Activated T-helper 1 cell treated with anti-CD3 and anti-CD28 coated beads, Interleukin-12 subunit alpha, Interleukin-12 subunit beta, Interleukin-2, Interleukin-4 antibody, amounts not matched to agents 30 ng/mL and 10 ng/mL and 1 ng/mL, durations not matched to agents 14 hours and 24 hours and 36 hours (primary cell): ENCODE measurements at regions of chr4 and their contacts with region 1.

Region 1: DNA sequence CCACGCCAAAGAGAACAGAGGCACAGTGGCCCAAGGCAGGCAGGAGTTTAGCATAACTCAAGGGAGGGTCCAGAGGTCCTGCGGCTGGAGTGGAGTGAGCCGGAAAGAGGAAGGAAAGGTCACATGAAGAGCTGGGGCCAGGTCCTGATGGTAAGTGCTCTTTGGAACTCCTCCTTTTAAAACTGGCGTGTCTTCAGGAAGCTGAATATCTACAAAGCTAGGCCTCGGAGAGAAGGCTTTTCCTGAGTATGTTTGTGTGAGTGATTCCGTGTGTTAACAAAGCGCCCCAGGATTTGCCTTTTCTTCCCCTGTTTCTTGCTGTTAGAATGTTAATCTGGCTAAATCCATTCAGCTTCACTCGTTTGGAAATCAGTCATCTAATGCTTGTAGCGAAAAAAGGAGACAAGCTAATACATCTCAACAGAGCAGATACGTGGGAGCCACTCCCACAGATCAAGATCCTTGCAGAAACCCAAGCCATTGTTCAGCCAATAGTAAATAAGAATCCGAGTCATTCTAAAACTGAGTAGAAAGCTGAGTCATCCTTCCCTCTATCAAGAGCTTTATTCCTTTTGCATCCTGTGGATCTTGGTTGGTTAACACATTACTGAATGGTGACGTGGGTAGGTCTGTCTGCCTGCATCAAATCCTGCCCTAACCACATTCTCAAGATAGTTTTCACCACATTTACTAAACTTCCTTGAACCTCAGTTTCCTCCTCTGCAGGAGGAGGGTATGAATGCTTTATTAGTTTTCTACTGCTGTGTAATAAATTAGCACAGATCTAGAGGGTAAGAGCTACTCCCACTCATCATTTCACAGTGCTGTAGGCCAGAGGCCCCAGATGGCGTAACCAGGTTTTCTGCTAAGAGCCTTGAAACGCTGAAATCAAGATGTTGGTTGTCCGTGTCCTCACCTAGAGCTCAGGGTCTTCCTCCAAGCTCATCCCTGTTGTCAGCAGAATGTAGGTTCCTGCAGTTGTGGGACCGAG is 43.2 kb upstream of the RBM47 start:
- DNase-seq: peak; percentile 59
- H3K4me3 Mint-ChIP-seq: peak overlapping the region; percentile 57
- H3K27ac Mint-ChIP-seq: peak overlapping the region; percentile 86
- H3K4me1 Mint-ChIP-seq: peaks cover 68% of the 10 kb centered on the region
- H3K27me3 Mint-ChIP-seq: no peaks in the 10 kb centered on the region

Region 2: DNA sequence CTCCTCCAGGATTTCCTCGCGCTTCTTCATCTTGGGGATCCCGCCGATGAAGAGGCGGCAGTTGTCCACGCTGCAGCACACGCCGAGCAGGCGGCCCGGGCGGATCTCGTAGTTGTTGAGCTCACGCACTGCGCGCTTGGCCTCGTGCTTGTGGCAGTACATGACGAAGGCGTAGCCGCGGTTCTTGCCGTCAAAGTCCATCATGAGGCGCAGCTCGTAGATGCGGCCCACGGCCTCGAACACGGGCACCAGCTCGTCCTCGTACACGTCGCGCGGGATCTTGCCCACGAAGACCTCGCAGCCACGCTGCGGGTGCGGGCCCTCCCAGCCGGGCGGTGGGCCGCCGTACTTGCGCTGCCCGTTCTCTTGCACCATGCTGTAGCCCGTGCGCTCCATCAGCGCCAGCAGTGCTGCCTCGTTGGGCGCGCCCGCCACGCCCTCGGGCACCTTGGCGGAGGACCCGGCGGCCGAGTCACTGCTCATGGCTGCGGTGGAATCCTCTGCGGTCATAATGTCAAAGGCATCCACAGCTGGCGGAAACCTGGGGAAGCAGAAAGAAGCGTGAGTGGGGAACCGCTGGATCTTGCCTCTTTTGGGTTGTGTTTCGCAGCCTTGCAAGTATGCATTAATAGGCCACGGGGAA is 234.3 kb before region 1 on chr4:
- intact Hi-C with region 1: loop called (anchors 1 kb)
- DNase-seq: no peak
- H3K4me3 Mint-ChIP-seq: peak overlapping the region; percentile 3
- H3K27ac Mint-ChIP-seq: peak overlapping the region; percentile 8
- H3K4me1 Mint-ChIP-seq: peaks cover 54% of the 10 kb centered on the region
- H3K27me3 Mint-ChIP-seq: no peaks in the 10 kb centered on the region

Region 3: DNA sequence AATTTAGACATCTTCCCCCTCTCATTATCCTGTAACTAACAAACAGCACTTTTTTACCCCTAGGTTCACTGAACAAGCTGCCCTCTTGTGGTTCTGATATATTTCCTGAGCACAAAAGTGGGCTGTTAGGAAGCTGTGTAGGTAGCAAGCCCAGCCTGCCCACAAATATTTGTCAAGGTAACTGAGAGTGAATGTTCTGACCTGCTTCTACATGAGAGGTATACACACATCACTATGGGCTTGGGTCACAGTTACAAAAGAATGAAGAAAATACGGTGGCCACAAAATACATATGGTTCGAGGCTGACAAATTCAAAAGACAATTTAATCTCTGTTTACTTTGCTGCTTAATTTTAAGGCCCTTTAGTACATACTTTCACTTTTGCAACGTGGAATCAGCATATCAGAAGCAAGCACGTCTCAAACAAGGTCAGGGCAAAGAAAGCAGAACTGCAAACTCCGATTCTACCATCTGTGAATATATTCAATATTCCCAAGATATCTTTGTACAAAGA is 121.8 kb before region 1 on chr4:
- intact Hi-C with region 1: loop called (anchors 5 kb)
- DNase-seq: peak; percentile 37
- H3K4me3 Mint-ChIP-seq: peak overlapping the region; percentile 84
- H3K27ac Mint-ChIP-seq: peak overlapping the region; percentile 81
- H3K4me1 Mint-ChIP-seq: peaks cover 65% of the 10 kb centered on the region
- H3K27me3 Mint-ChIP-seq: no peaks in the 10 kb centered on the region

Region 4: DNA sequence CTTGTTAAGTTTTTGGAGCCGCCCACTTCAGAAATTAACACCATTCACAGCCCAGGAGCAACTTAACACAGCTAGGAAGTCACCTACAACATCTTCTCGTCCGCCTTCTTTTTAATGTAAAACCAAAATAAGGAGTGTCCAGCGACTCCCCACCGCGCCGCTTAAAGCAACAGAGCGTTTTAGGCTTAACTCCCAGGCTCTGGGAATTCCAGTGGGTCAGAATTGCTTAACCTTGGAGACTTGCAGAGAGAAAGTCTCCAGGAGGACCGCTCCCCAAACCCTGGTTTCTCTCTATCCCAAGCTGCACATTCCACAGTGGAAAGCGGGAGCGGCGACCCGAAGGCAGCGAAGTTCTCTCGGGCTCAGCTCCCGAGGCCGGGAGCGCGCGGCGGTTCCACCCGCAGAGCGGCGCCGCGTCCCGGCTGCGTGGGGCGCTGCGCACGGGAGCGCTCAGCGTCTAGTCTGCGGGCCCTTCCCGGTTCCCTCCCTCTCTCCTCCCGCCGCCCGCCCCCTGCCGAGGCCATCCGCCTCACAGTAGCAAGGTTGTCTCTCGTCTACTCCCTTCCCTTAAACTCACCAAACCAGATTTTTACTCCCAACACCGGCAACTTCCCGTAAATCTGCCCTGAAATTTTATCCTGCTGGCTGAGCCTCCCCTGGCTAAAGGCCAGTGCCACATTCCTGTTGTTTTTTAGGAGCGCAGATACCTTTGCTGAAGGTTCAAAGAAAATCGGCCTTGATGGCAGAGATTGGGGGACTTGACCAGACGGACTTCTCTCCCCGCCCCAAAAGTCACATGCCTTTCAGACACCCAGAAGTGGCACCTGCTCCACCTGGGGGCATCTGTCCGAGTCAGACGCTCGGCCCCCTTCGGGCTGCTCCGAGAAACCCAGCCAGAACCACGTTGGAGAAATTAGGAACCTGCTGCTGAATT is 43.2 kb before region 1 on chr4 and contains the start of gene RBM47:
- intact Hi-C with region 1: loop called (anchors 1 kb)
- DNase-seq: peak; percentile 12
- H3K4me3 Mint-ChIP-seq: peak within 1 kb of the TSS; percentile 92
- H3K27ac Mint-ChIP-seq: peak within 1 kb of the TSS; percentile 84
- H3K4me1 Mint-ChIP-seq: peaks cover 41% of the 10 kb centered on the region
- H3K27me3 Mint-ChIP-seq: peaks cover 2% of the 10 kb centered on the region
- total RNA-seq, gene RBM47: 20.3 and 21.4 TPM in 2 replicates

Region 5: DNA sequence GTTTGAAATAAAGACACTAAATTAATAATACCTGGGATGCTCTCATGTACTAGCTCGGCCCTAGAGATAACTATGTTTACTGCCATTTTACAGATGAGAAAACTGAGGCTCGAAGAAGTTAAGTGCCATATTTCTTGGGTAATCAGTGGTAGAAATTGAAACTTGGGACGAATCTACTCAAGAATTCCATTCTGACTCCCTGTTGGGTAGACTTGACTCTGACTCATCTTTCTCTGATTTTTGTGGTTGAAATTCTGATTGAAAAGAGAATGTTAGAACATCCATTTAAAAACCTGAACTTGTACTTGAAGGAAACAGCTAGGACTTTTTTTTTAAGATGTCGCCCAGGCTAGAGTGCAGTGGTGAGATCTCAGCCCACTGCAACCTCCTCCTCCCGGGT is 26.8 kb after region 1 on chr4:
- intact Hi-C with region 1: loop called (anchors 1 kb)
- DNase-seq: no peak
- H3K4me3 Mint-ChIP-seq: peak overlapping the region; percentile 7
- H3K27ac Mint-ChIP-seq: peak overlapping the region; percentile 74
- H3K4me1 Mint-ChIP-seq: peaks cover 34% of the 10 kb centered on the region
- H3K27me3 Mint-ChIP-seq: no peaks in the 10 kb centered on the region

Region 6: GRCh38 chr4:40749717-40750460 is 77.1 kb after region 1 on chr4 and contains the start of gene NSUN7:
- intact Hi-C with region 1: no loop called
- DNase-seq: peak; percentile 10
- H3K4me3 Mint-ChIP-seq: peak within 1 kb of the TSS; percentile 68
- H3K27ac Mint-ChIP-seq: no peak within 1 kb of the TSS
- H3K4me1 Mint-ChIP-seq: peaks cover 12% of the 10 kb centered on the region
- H3K27me3 Mint-ChIP-seq: peaks cover 39% of the 10 kb centered on the region
- total RNA-seq, gene NSUN7: 0.23 and 0.66 TPM in 2 replicates

Region 7: GRCh38 chr4:40908702-40909362 is 236.0 kb after region 1 on chr4:
- intact Hi-C with region 1: loop called (anchors 2 kb)
- DNase-seq: peak; percentile 61
- H3K4me3 Mint-ChIP-seq: peak overlapping the region; percentile 43
- H3K27ac Mint-ChIP-seq: peak overlapping the region; percentile 91
- H3K4me1 Mint-ChIP-seq: peaks cover 34% of the 10 kb centered on the region
- H3K27me3 Mint-ChIP-seq: no peaks in the 10 kb centered on the region

Region 8: DNA sequence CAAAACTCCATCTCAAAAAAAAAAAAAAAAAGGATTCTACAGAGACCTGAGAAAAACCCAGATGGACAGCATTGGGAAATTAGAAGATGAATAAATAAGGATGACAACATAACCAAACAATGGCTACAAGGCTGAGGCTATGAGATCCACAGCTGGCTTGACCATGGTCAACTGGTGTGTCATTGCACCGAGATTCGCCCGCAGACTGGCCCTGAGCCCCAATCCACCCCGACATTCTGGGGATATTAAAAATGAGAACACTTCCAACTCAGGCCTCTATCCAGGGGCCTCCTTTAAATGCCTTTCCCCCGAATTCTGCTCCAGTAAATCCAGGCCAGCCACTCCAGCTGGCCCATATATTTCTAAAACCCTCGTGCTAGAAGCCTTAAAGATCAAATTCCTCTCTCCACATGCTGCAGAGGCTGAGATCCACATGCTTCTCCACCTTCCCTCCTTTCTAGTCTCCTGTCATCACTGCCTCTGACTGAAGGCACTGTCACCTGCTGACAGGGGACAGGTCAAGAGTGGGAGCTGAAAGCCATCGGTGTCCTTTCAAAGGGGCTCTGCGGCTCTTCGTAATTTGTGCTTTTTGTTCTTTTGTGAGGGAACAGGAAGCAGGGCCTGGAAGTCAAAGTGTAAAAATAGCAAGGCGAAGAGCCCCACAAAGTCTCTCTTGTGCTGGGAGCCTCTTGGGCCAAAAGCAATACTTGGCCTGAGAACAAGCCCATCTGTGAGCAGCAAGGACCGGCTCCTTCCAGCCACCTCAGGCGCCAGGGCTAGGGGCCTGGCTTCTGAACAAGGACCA is 280.7 kb after region 1 on chr4:
- intact Hi-C with region 1: no loop called
- DNase-seq: no peak
- H3K4me3 Mint-ChIP-seq: no peak overlapping the region
- H3K27ac Mint-ChIP-seq: no peak overlapping the region
- H3K4me1 Mint-ChIP-seq: no peaks in the 10 kb centered on the region
- H3K27me3 Mint-ChIP-seq: no peaks in the 10 kb centered on the region

Region 9: GRCh38 chr4:41204400-41204978 is 531.7 kb after region 1 on chr4:
- intact Hi-C with region 1: no loop called
- DNase-seq: no peak
- H3K4me3 Mint-ChIP-seq: no peak overlapping the region
- H3K27ac Mint-ChIP-seq: no peak overlapping the region
- H3K4me1 Mint-ChIP-seq: peaks cover 11% of the 10 kb centered on the region
- H3K27me3 Mint-ChIP-seq: peaks cover 6% of the 10 kb centered on the region